Transverse colon (tissue), 4 donors: ENCODE measurements at regions of chr7 and their contacts with region 1.

Region 1: DNA sequence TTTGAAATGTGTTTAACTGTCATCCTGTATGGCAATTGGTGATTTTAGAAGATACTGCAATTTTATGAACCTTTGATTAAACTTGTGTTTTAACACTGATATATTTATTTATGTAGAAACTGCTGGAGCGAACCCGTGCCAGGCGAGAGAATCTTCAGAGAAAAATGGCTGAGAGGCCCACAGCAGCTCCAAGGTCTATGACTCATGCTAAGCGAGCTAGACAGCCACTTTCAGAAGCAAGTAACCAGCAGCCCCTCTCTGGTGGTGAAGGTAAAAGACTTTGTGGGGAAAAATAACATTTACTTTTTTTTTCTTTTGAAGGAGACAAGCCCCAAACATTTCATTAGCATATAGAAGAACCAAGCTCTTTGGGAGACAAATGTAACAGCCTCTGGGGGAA is 6.5 kb downstream of the ANLN start:
- DNase-seq: no peak
- H3K4me3 ChIP-seq: no peak overlapping the region
- H3K27ac ChIP-seq: no peak overlapping the region
- H3K4me1 ChIP-seq: peaks cover 0 to 11% (median 5%) of the 10 kb centered on the region in 4 donors
- H3K27me3 ChIP-seq: no peaks in the 10 kb centered on the region
- CTCF ChIP-seq: no peak
- EP300 ChIP-seq: no peak
- POLR2A ChIP-seq: no peak

Region 2: GRCh38 chr7:35869810-35870209 is 526.3 kb before region 1 on chr7:
- in situ Hi-C with region 1: no loop called
- intact Hi-C with region 1: loop called (anchors 5 kb)
- DNase-seq: no peak
- H3K4me3 ChIP-seq: no peak overlapping the region
- H3K27ac ChIP-seq: no peak overlapping the region
- H3K4me1 ChIP-seq: peaks cover 3 to 36% (median 9%) of the 10 kb centered on the region in 4 donors
- H3K27me3 ChIP-seq: no peaks in the 10 kb centered on the region
- CTCF ChIP-seq: no peak
- EP300 ChIP-seq: no peak
- POLR2A ChIP-seq: no peak

Region 3: GRCh38 chr7:36929791-36930190 is 533.6 kb after region 1 on chr7:
- in situ Hi-C with region 1: no loop called
- intact Hi-C with region 1: no loop called
- DNase-seq: no peak
- H3K4me3 ChIP-seq: no peak overlapping the region
- H3K27ac ChIP-seq: no peak overlapping the region
- H3K4me1 ChIP-seq: no peaks in the 10 kb centered on the region
- H3K27me3 ChIP-seq: no peaks in the 10 kb centered on the region
- CTCF ChIP-seq: no peak
- EP300 ChIP-seq: no peak
- POLR2A ChIP-seq: no peak